Endothelial cell of umbilical vein (primary cell): ENCODE measurements at regions of chr19 and their contacts with region 1.

Region 1: DNA sequence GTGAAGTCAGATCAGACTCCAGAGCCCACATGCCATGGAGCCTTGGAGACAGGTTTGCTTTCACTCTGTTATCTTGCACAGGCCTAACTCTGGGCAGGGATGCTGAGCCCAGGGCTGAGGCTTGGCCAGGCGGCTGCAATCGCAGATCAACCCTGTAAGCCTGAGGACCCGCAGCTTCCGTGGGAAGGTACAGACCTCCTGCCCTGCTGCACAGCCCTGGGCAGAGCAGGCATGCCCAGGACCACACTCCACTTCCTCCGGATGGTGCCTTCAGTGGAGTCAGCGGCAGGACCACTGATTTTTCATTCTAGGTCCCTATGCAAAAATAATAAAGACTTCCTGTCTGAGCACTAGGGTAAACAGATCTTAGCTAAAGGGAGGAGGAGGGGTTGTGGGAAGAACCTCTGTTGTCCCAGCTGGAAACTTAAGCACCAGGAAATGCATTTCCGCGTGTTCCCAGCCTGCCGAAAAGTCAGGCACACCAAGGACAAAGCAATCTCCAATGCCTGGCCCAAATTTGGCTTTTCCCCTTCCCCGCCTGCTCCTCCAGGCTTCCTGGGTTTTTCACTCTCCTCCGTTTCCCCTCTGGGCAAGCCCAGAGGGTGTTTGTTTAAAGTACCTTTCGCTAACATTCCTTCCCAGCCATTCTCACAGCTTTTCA is 87.3 kb downstream of the KCTD15 start:
- DNase-seq: peak; percentile 93
- H3K4me3 ChIP-seq: peak overlapping the region in 1 of 3 experiments; percentile 8
- H3K27ac ChIP-seq: peak overlapping the region; percentile 84
- H3K4me1 ChIP-seq: peaks cover 28% of the 10 kb centered on the region
- H3K27me3 ChIP-seq: no peaks in the 10 kb centered on the region
- CTCF ChIP-seq: no peak
- POLR2A ChIP-seq: peak; percentile 56

Region 2: GRCh38 chr19:33373701-33374421 is 510.1 kb before region 1 on chr19 and contains the start of gene CEBPG:
- CTCF ChIA-PET with region 1: no interaction called
- POLR2A ChIA-PET with region 1: no interaction called
- dilution Hi-C with region 1: no loop called
- intact Hi-C with region 1: loop called (anchors 10 kb)
- DNase-seq: peak; percentile 54
- H3K4me3 ChIP-seq: peak within 1 kb of the TSS; percentile 81 to 97 (median 94)
- H3K27ac ChIP-seq: peak within 1 kb of the TSS; percentile 96
- H3K4me1 ChIP-seq: peaks cover 46% of the 10 kb centered on the region
- H3K27me3 ChIP-seq: peaks cover 0 to 1% of the 10 kb centered on the region in 2 experiments
- CTCF ChIP-seq: peak; percentile 23 to 26
- POLR2A ChIP-seq: no peak
- total RNA-seq, gene CEBPG: 24.3 and 24.6 TPM in 2 replicates

Region 3: DNA sequence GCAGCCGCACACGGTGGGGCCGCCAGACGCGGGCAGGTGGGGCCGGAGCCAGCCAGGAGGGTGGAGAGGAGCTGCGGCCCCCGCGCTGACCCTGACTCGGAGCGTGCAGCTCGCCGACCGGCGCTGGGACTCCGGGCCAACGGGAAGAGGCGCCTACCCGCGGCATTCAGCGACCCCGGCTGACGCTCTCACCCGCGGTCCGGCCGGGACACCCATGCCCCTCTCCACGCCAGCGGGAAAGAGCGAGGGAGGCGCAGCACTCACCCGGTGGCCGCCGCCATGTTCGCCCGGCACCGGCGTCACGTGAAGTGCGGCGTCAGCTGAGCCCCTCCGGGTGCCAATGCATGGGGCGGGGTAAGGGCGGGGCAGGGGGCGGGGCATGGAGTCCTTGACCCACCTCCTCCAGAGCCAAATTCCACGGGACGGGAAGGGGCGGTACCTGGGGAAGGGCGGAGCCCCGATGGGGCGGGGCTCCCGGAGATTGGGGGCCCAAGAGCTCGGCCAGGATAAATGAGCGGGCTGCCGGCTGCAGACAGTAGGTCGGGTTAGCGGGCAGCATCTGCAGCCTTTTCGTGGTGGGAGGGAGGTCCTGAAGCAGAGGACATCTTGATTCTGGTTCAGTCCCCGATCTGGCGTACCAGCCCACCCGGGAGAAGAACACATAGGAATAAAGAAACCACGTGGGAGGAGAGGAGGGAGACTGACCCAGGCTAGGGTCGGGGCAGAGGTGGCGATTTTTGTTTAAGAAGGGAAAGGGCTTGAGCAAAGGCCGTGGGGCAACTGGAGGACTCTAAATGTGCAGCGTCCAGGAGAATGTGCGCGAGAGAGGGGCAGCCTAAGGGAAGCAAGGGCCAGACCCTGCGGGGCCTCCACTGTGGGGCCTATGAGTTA is 362.3 kb before region 1 on chr19 and contains the start of gene PEPD:
- CTCF ChIA-PET with region 1: no interaction called
- POLR2A ChIA-PET with region 1: no interaction called
- dilution Hi-C with region 1: no loop called
- intact Hi-C with region 1: loop called (anchors 1 kb)
- DNase-seq: peak; percentile 89
- H3K4me3 ChIP-seq: peak within 1 kb of the TSS; percentile 73 to 93 (median 83)
- H3K27ac ChIP-seq: peak within 1 kb of the TSS; percentile 25
- H3K4me1 ChIP-seq: peaks cover 9% of the 10 kb centered on the region
- H3K27me3 ChIP-seq: no peaks in the 10 kb centered on the region
- CTCF ChIP-seq: no peak
- POLR2A ChIP-seq: peak; percentile 84
- total RNA-seq, gene PEPD: 62.7 and 73.7 TPM in 2 replicates

Region 4: DNA sequence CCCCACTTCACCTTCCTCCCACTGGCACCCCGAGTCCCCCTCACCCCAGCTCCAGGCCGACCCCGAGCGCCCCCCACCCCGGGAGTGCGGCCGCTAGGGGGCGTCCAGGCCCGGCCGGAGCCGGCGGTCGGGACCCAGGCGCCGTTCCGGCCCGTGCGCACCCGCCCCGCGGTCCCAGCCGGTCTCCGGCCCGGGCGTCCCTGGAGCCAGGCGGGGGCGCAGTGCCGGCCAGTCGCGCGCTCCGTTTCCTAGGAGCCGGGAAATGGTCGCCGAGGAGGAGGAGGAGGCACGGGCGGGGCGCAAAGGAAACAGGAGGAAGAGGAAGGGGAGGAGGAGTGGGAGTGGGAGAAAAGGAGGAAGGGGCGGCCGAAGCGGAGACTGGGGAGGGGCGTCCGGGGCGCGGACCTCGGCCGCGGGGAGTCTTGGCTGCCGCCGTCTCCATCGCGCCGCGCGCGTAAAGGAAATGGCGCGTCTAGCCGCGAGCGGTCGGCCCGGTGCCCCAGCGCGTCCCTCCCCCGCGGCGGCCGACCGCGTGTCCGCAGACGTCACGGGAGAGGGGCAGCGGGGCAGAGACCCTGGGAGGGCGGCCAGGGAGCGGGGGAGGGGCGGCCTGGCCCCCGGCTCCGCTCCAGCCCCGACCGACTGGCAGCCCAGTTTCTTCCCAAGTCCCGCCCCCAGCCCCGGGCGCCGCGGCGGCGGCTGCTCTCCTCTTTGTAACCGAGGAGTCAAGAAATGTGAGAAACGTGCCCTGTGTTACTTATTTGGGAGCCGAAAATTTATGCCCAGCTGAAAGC is 88.4 kb before region 1 on chr19:
- CTCF ChIA-PET with region 1: interaction called, 9 read pairs
- POLR2A ChIA-PET with region 1: no interaction called
- dilution Hi-C with region 1: no loop called
- intact Hi-C with region 1: loop called (anchors 1 kb)
- DNase-seq: peak; percentile 88
- H3K4me3 ChIP-seq: peak overlapping the region; percentile 64 to 86 (median 71)
- H3K27ac ChIP-seq: peak overlapping the region; percentile 83
- H3K4me1 ChIP-seq: peaks cover 17% of the 10 kb centered on the region
- H3K27me3 ChIP-seq: no peaks in the 10 kb centered on the region
- CTCF ChIP-seq: peak; percentile 74 to 85
- POLR2A ChIP-seq: peak; percentile 81

Region 5: DNA sequence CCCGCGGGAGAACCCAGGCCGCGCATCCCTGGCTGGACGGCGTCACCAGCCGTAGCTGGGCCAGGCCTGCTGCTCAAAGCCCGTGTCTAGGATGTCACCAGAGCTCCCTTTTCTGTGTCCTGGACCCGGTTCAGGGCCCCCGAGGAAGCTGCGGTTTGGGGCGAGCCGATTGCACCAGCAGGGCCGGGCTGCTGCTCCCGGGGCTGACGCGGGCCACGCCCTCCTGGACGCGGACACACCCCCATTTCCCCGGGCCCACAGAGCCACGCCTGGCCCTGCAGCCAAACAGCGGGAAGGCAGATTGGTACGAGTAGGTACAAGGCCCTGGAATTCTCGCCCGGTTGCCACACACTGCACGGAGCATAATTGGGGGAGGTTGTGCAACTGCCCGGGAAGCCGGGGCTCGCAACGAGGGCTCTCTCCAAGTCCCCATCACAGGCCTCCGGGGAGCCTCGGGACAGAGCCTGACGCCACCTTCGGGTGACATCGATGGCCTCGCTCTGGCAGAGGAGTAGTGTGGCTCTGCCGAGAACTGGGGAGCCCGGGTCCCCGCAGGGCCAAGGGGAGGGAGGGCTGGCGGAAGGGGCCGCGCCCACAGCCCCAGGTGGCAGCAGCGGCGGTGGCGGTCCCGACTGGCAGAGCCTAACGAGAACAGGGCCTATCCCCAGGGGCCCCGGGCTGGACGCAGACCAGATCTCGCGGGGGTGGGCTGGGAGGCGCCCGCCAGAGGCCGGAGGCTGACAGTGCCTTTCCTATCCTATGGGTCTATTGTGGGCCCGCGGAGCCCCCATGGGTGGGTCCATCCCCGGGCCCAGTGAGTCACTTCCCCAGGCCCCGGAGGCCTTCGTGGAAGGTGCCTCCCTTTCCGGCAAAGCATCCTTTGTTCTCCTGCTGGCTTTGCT is 63.9 kb before region 1 on chr19:
- CTCF ChIA-PET with region 1: interaction called, 3 read pairs
- POLR2A ChIA-PET with region 1: no interaction called
- dilution Hi-C with region 1: no loop called
- intact Hi-C with region 1: loop called (anchors 1 kb)
- DNase-seq: peak; percentile 55
- H3K4me3 ChIP-seq: peak overlapping the region in 2 of 3 experiments; percentile 9 to 26
- H3K27ac ChIP-seq: peak overlapping the region; percentile 69
- H3K4me1 ChIP-seq: peaks cover 26% of the 10 kb centered on the region
- H3K27me3 ChIP-seq: no peaks in the 10 kb centered on the region
- CTCF ChIP-seq: no peak
- POLR2A ChIP-seq: no peak

Region 6: DNA sequence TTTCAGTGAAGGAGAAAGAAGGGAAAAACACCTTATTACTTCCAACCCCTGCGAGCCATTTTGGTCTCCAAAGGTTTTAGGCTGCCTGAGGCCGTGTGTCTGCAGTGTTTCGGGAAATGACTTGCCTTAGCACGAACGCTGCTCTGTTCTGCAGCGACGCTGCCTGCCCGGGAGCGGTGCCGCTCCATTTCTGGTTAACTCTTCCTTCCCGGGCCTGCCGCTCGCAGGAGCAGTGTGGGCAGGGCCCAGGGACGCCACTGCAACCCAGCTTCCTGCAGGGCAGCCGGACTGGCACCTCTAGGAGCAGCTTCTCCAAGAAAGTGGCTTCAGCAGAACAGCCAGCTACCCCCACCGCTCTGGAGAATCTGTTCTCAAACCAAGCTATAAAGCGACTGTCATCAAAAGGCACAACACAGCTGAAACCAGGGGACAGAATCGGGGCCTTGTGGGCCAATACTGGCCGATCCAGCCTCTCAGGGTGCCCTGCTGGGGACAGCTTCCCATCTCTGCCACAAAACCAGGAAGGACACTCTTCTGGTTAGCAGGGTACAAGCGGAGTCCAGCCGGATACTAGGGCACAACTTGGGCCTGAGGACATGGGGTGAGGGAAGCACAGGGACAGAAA is 15.1 kb before region 1 on chr19:
- CTCF ChIA-PET with region 1: interaction called, 5 read pairs
- POLR2A ChIA-PET with region 1: no interaction called
- dilution Hi-C with region 1: no loop called
- intact Hi-C with region 1: loop called (anchors 1 kb)
- DNase-seq: peak; percentile 43
- H3K4me3 ChIP-seq: peak overlapping the region in 1 of 3 experiments; percentile 14
- H3K27ac ChIP-seq: no peak overlapping the region
- H3K4me1 ChIP-seq: peaks cover 7% of the 10 kb centered on the region
- H3K27me3 ChIP-seq: peaks cover 2 to 3% of the 10 kb centered on the region in 2 experiments
- CTCF ChIP-seq: no peak
- POLR2A ChIP-seq: no peak

Region 7: DNA sequence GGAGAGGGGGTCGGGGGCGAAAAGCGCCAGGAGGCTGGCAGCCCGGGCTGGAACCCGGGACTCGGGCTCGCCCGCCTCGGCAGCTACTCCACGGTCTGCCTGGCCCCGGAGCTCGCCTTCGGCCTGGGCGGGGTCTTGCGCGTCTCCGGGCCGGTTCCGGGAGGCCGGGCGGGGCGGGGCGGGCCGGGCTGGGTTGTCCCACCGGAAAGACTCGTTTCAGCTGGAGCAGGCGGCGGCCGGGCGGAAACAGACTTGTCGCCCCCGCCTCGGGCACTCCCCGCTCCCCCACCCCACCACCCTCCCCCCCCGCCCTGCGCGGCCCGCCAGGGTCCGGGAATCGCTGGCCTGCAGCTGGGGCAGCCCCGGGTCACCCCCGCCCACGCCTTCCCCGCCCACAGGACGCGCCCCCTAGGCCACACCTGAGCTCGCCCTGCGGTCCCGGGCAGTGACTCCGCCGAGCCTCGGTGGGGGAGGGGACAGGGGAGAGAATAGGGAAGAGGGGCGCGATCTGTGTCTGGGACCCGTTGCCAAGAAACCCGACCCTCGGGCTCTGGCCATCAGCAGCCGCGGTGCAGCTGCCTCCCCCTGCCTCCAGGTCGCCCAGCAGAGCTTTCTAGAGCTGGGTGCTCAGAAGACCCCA is 22.1 kb after region 1 on chr19:
- CTCF ChIA-PET with region 1: interaction called, 7 read pairs
- POLR2A ChIA-PET with region 1: no interaction called
- dilution Hi-C with region 1: no loop called
- intact Hi-C with region 1: loop called (anchors 1 kb)
- DNase-seq: peak; percentile 22
- H3K4me3 ChIP-seq: peak overlapping the region in 2 of 3 experiments; percentile 2 to 24
- H3K27ac ChIP-seq: peak overlapping the region; percentile 83
- H3K4me1 ChIP-seq: peaks cover 20% of the 10 kb centered on the region
- H3K27me3 ChIP-seq: peaks cover 0 to 2% of the 10 kb centered on the region in 2 experiments
- CTCF ChIP-seq: no peak
- POLR2A ChIP-seq: no peak